Activated T-helper 1 cell treated with anti-CD3 and anti-CD28 coated beads, Interleukin-12 subunit alpha, Interleukin-12 subunit beta, Interleukin-2, Interleukin-4 antibody, amounts not matched to agents 30 ng/mL and 10 ng/mL and 1 ng/mL, durations not matched to agents 14 hours and 24 hours and 36 hours (primary cell): ENCODE measurements at regions of chr17 and their contacts with region 1.

Region 1: GRCh38 chr17:48543107-48543853 is 1.6 kb downstream of the HOXB2 start:
- DNase-seq: peak; percentile 60
- H3K4me3 Mint-ChIP-seq: peak overlapping the region; percentile 95
- H3K27ac Mint-ChIP-seq: peak overlapping the region; percentile 96
- H3K4me1 Mint-ChIP-seq: peaks cover 57% of the 10 kb centered on the region
- H3K27me3 Mint-ChIP-seq: peaks cover 8% of the 10 kb centered on the region

Region 2: DNA sequence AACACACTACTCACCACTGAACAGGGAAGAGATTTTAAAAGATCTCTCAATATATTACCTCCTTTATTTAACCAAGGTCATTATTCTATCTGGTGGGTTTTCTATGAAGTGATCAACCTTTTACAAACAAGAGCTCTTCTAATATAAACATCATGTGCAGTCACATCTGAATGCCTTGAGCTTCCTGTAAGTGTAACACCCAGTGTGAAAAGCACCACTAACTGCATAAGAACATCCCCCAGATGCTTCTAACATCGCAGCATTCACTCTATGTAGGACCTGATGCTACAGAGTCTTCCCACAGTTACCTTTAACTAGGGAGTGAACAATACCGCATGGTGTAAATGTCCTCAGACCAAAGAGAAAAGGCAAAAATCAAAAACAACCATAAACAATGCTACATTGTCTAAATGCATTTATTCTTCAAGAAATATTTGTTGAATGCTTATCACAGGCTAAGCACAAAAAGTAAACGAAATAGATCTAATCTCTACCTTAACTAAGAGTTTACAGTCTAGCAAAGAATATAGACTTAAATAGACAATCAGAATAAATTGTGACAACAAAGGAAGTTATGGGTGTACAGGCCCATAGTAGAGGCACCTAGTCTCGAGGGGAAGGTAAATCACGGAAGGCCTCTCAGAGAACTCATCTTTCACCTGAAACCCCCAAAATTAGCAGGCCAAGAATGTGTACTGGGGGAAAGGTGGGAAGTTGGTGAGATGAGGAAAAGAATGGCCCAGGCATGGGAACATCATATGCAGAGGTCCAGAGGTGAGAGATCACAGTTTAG is 129.5 kb before region 1 on chr17:
- intact Hi-C with region 1: loop called (anchors 5 kb)
- DNase-seq: no peak
- H3K4me3 Mint-ChIP-seq: peak overlapping the region; percentile 24
- H3K27ac Mint-ChIP-seq: peak overlapping the region; percentile 86
- H3K4me1 Mint-ChIP-seq: peaks cover 82% of the 10 kb centered on the region
- H3K27me3 Mint-ChIP-seq: no peaks in the 10 kb centered on the region

Region 3: GRCh38 chr17:48483471-48484131 is 59.7 kb before region 1 on chr17:
- intact Hi-C with region 1: loop called (anchors 2 kb)
- DNase-seq: peak; percentile 40
- H3K4me3 Mint-ChIP-seq: peak overlapping the region; percentile 37
- H3K27ac Mint-ChIP-seq: peak overlapping the region; percentile 70
- H3K4me1 Mint-ChIP-seq: peaks cover 46% of the 10 kb centered on the region
- H3K27me3 Mint-ChIP-seq: no peaks in the 10 kb centered on the region

Region 4: GRCh38 chr17:48505787-48506645 is 37.3 kb before region 1 on chr17:
- intact Hi-C with region 1: loop called (anchors 1 kb)
- DNase-seq: peak; percentile 70
- H3K4me3 Mint-ChIP-seq: peak overlapping the region; percentile 60
- H3K27ac Mint-ChIP-seq: peak overlapping the region; percentile 84
- H3K4me1 Mint-ChIP-seq: peaks cover 49% of the 10 kb centered on the region
- H3K27me3 Mint-ChIP-seq: peaks cover 8% of the 10 kb centered on the region